Posterior vena cava (tissue), 2 donors: ENCODE measurements at regions of chr11 and their contacts with region 1.

Region 1: DNA sequence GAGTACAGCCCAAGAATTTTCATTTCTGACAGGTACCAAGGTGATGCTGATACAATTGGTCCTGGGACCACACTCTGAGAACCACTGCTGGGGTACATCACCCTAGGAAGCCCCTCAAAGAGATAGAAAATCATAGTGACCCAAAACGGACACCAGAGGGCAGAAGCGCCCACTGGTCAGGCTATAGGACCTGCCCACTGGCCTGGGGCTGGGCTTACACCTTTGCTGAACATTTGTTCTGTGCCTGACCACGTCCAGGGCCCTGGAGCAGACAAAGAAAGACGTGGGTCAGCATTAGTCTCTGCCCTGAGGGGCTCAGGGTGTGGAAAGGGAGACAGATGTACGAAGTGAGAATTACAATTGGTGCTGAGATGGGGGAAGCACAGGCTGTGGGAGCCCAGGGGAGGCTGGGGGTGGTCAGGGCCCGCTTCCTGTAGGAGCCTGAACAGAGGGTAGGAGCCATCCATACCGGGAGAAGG is 14.4 kb upstream of the SERPINH1 start:
- DNase-seq: no peak

Region 2: DNA sequence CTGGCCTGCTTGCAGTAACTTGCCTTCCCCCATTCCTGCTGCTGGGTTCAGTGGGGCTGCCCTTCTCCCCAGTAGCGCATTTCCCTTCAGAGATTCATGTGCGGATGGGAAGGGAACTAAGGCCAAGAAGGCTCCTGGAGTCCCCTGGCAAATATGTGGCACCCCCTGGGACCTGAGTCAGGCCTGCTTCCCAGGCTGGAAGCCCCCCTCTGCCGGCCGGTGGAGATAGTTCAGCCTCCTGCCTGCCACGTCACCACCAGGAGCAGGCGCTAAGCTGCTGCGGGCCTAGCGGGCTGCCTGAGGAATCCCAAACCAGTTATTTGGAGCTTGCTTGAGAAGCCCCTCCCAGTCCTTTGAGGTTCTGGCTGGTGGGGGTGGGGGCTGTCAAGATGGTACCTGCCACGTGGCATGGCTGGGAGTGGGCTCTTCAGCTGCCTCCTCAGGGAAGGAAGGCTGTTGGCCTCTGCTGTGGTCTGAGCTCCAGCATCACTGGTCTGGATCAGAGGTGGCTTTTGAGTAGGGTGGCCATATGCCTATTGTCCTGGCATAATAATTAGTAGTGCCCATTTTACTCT is 16.4 kb after region 1 on chr11:
- intact Hi-C with region 1: loop called in 1 of 2 experiments (anchors 2 kb)
- DNase-seq: peak; percentile 94

Region 3: GRCh38 chr11:75582895-75583717 is 35.5 kb after region 1 on chr11:
- intact Hi-C with region 1: loop called in 1 of 2 experiments (anchors 5 kb)
- DNase-seq: peak; percentile 91

Region 4: GRCh38 chr11:75597636-75598035 is 50.0 kb after region 1 on chr11:
- intact Hi-C with region 1: no loop called
- DNase-seq: no peak

Region 5: GRCh38 chr11:75797792-75798191 is 250.2 kb after region 1 on chr11:
- intact Hi-C with region 1: loop called in 1 of 2 experiments (anchors 5 kb)
- DNase-seq: peak; percentile 54